ENCODE measurements at regions of chr5 and their contacts with region 1.

Region 1: DNA sequence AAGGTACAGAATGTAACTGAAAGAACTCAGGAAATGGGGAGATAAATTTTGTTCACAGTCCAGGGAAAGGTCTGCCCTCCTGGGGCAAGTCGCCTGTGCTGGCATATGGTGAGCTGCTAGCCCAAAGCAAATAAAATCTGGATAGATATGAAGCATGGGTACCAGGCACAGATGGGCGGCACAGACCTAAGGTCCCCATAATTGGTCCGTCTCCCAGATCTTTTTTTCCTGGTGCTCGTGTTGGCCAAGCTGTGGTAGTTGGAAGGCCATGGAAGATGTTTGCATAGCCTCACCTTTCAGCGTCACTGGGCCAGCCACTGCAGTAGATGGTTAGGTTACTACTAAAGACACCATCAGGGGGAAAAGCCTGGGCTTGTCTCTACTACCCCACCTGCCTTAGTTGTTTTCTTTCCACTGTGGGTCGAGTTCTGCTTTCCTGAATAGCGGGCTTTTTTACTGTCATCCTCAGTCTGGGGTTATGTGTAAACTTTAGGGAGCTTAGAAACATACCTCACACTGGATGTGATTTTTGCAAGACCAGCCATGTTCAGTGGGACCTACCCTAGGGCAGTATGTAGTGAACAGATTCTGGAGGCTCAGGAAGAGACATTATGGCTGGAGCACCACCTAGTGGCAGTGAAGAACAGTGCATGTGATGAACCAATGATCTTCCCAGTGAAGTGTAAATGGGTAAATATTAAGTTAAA is 24.2 kb upstream of the GLRX start:
- DNase-seq: peak; percentile 82
- ATAC-seq: peak; percentile 77
- H3K4me3 ChIP-seq: no peak overlapping the region
- H3K4me3 Mint-ChIP-seq: no peak overlapping the region
- H3K27ac ChIP-seq: no peak overlapping the region
- H3K27ac Mint-ChIP-seq: peak overlapping the region; percentile 46
- H3K4me1 ChIP-seq: peaks cover 9 to 10% of the 10 kb centered on the region in 2 donors
- H3K4me1 Mint-ChIP-seq: peaks cover 12% of the 10 kb centered on the region
- H3K27me3 ChIP-seq: no peaks in the 10 kb centered on the region
- H3K27me3 Mint-ChIP-seq: no peaks in the 10 kb centered on the region
- CTCF ChIP-seq: peak; percentile 95

Region 2: GRCh38 chr5:95486191-95486590 is 360.5 kb before region 1 on chr5:
- CTCF ChIA-PET with region 1: no interaction called
- POLR2A ChIA-PET with region 1: no interaction called
- intact Hi-C with region 1: no loop called
- DNase-seq: no peak
- ATAC-seq: no peak
- H3K4me3 ChIP-seq: no peak overlapping the region
- H3K4me3 Mint-ChIP-seq: no peak overlapping the region
- H3K27ac ChIP-seq: no peak overlapping the region
- H3K27ac Mint-ChIP-seq: no peak overlapping the region
- H3K4me1 ChIP-seq: no peaks in the 10 kb centered on the region
- H3K4me1 Mint-ChIP-seq: no peaks in the 10 kb centered on the region
- H3K27me3 ChIP-seq: no peaks in the 10 kb centered on the region
- H3K27me3 Mint-ChIP-seq: no peaks in the 10 kb centered on the region
- CTCF ChIP-seq: no peak

Region 3: GRCh38 chr5:95664204-95664786 is 182.4 kb before region 1 on chr5:
- CTCF ChIA-PET with region 1: interaction called, 105 read pairs
- POLR2A ChIA-PET with region 1: no interaction called
- intact Hi-C with region 1: loop called (anchors 1 kb)
- DNase-seq: peak; percentile 56
- ATAC-seq: no peak
- H3K4me3 ChIP-seq: no peak overlapping the region
- H3K4me3 Mint-ChIP-seq: no peak overlapping the region
- H3K27ac ChIP-seq: no peak overlapping the region
- H3K27ac Mint-ChIP-seq: no peak overlapping the region
- H3K4me1 ChIP-seq: no peaks in the 10 kb centered on the region
- H3K4me1 Mint-ChIP-seq: no peaks in the 10 kb centered on the region
- H3K27me3 ChIP-seq: no peaks in the 10 kb centered on the region
- H3K27me3 Mint-ChIP-seq: no peaks in the 10 kb centered on the region
- CTCF ChIP-seq: peak; percentile 95

Region 4: GRCh38 chr5:95690333-95690732 is 156.4 kb before region 1 on chr5:
- CTCF ChIA-PET with region 1: no interaction called
- POLR2A ChIA-PET with region 1: no interaction called
- intact Hi-C with region 1: no loop called
- DNase-seq: no peak
- ATAC-seq: no peak
- H3K4me3 ChIP-seq: no peak overlapping the region
- H3K4me3 Mint-ChIP-seq: no peak overlapping the region
- H3K27ac ChIP-seq: no peak overlapping the region
- H3K27ac Mint-ChIP-seq: no peak overlapping the region
- H3K4me1 ChIP-seq: no peaks in the 10 kb centered on the region
- H3K4me1 Mint-ChIP-seq: no peaks in the 10 kb centered on the region
- H3K27me3 ChIP-seq: peaks cover 0 to 4% (median 0%) of the 10 kb centered on the region in 4 experiments
- H3K27me3 Mint-ChIP-seq: peaks cover 3% of the 10 kb centered on the region
- CTCF ChIP-seq: no peak

Region 5: GRCh38 chr5:95808686-95809413 is 37.9 kb before region 1 on chr5:
- CTCF ChIA-PET with region 1: interaction called, 25 read pairs
- POLR2A ChIA-PET with region 1: interaction called, 9 read pairs
- intact Hi-C with region 1: loop called (anchors 1 kb)
- DNase-seq: peak; percentile 95
- ATAC-seq: peak; percentile 100
- H3K4me3 ChIP-seq: peak overlapping the region in 3 of 5 experiments; percentile 27 to 39 (median 33)
- H3K4me3 Mint-ChIP-seq: peak overlapping the region; percentile 86
- H3K27ac ChIP-seq: peak overlapping the region; percentile 81 to 97
- H3K27ac Mint-ChIP-seq: peak overlapping the region; percentile 97
- H3K4me1 ChIP-seq: peaks cover 34 to 37% of the 10 kb centered on the region in 2 donors
- H3K4me1 Mint-ChIP-seq: peaks cover 58% of the 10 kb centered on the region
- H3K27me3 ChIP-seq: no peaks in the 10 kb centered on the region
- H3K27me3 Mint-ChIP-seq: no peaks in the 10 kb centered on the region
- CTCF ChIP-seq: no peak

Region 6: GRCh38 chr5:95822542-95823181 is 24.0 kb before region 1 on chr5 and contains the start of gene GLRX:
- CTCF ChIA-PET with region 1: interaction called, 181 read pairs
- POLR2A ChIA-PET with region 1: interaction called, 4 read pairs
- intact Hi-C with region 1: loop called (anchors 1 kb)
- DNase-seq: peak; percentile 63
- ATAC-seq: peak; percentile 41
- H3K4me3 ChIP-seq: peak within 1 kb of the TSS; percentile 70 to 100 (median 97)
- H3K4me3 Mint-ChIP-seq: peak within 1 kb of the TSS; percentile 99
- H3K27ac ChIP-seq: peak within 1 kb of the TSS; percentile 67 to 90
- H3K27ac Mint-ChIP-seq: peak within 1 kb of the TSS; percentile 99
- H3K4me1 ChIP-seq: peaks cover 52 to 59% of the 10 kb centered on the region in 2 donors
- H3K4me1 Mint-ChIP-seq: peaks cover 70% of the 10 kb centered on the region
- H3K27me3 ChIP-seq: no peaks in the 10 kb centered on the region
- H3K27me3 Mint-ChIP-seq: no peaks in the 10 kb centered on the region
- CTCF ChIP-seq: no peak
- total RNA-seq, gene GLRX: 44.6 and 50.0 TPM in 2 replicates

Region 7: DNA sequence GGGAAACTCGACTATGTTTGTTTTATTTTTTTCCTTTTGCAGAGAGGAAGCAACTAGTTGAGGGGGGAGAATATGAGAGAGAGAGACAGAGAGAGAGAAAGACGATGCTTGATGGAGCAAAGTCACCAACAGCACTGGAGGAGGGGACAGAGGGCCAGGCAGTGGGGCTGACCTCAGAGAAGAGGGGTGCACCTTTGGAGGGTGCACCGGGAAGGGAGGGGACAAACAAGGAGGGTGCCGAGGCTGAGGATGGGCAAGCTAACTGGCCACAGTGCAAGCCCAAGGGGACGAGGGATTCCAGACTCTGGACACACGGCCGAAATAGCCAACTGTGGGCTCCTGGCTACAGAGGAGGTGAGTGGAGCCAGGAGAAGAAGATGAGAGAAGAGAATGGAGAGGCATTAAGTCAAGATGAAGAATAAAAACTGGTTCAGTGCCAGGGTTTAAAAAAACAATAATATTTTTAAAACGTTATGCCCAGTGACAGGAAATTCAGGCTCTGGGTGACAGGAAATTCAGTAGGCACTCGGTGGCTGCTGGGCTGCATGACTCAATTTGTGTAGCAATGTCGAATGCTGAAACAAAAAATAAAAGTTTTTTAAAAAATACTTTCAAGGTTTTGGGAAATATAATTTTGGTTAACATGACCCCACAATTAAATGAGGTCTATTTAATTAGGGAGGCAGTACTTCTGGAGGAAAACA is 10.9 kb before region 1 on chr5:
- CTCF ChIA-PET with region 1: interaction called, 11 read pairs
- POLR2A ChIA-PET with region 1: no interaction called
- intact Hi-C with region 1: loop called (anchors 1 kb)
- DNase-seq: peak; percentile 35
- ATAC-seq: no peak
- H3K4me3 ChIP-seq: peak overlapping the region; percentile 30 to 82 (median 67)
- H3K4me3 Mint-ChIP-seq: peak overlapping the region; percentile 75
- H3K27ac ChIP-seq: peak overlapping the region; percentile 60 to 86
- H3K27ac Mint-ChIP-seq: peak overlapping the region; percentile 91
- H3K4me1 ChIP-seq: peaks cover 24 to 26% of the 10 kb centered on the region in 2 donors
- H3K4me1 Mint-ChIP-seq: peaks cover 51% of the 10 kb centered on the region
- H3K27me3 ChIP-seq: no peaks in the 10 kb centered on the region
- H3K27me3 Mint-ChIP-seq: no peaks in the 10 kb centered on the region
- CTCF ChIP-seq: no peak

Region 8: DNA sequence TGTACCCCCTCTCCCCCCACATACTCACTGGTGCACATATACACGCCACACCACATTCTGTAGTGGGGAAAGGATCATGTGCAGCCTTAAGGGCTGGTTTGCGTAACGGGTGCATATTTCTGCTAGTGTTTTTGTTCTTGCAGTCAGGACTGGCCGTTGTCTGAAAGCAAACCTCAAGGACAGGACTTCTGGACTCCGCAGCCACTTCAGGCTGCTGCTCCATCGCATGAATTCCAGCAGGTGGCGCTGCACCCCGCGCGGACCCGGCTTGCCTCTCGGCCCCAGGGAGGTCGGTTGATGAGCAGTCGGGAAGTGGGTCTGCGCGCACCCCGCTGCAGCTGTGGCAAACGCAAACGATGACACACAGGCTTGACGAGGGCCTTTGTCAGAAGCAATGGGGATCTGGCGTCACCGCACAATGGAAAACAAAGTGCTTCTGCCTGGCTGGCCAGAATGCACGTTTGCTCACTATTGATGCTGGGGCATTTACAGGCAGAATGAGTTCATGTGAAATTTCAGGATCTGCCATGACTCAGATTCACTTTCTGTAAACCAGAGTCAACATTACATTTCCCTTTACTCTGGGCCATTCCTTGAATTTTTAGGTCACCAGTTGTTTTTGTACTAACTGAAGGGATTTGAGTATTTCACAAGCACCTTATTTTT is 12.1 kb after region 1 on chr5:
- CTCF ChIA-PET with region 1: interaction called, 10 read pairs
- POLR2A ChIA-PET with region 1: no interaction called
- intact Hi-C with region 1: no loop called
- DNase-seq: peak; percentile 89
- ATAC-seq: peak; percentile 94
- H3K4me3 ChIP-seq: peak overlapping the region in 3 of 5 experiments; percentile 7 to 25 (median 18)
- H3K4me3 Mint-ChIP-seq: peak overlapping the region; percentile 76
- H3K27ac ChIP-seq: no peak overlapping the region
- H3K27ac Mint-ChIP-seq: no peak overlapping the region
- H3K4me1 ChIP-seq: peaks cover 15 to 18% of the 10 kb centered on the region in 2 donors
- H3K4me1 Mint-ChIP-seq: peaks cover 30% of the 10 kb centered on the region
- H3K27me3 ChIP-seq: peaks cover 0 to 6% (median 1%) of the 10 kb centered on the region in 4 experiments
- H3K27me3 Mint-ChIP-seq: peaks cover 11% of the 10 kb centered on the region
- CTCF ChIP-seq: peak; percentile 97

Region 9: DNA sequence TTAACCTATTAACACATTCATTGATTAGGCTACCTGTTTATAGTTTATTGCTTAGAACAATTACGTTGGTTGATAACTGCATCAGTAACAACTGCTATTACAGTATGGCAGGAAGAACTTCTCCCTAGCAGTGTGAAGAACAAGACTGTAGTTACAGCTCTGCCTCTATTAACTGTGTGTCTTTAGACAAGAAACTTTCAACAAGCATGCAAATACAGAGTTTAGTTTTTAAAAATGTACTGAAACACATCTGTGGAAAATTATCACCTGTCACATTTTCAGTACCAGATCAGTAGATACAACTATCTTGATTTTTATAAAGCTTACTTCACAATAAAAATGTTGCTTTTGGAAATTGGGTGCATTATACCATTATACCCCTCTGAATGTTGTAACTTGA is 92.8 kb after region 1 on chr5:
- CTCF ChIA-PET with region 1: no interaction called
- POLR2A ChIA-PET with region 1: no interaction called
- intact Hi-C with region 1: no loop called
- DNase-seq: no peak
- ATAC-seq: no peak
- H3K4me3 ChIP-seq: no peak overlapping the region
- H3K4me3 Mint-ChIP-seq: no peak overlapping the region
- H3K27ac ChIP-seq: no peak overlapping the region
- H3K27ac Mint-ChIP-seq: no peak overlapping the region
- H3K4me1 ChIP-seq: no peaks in the 10 kb centered on the region
- H3K4me1 Mint-ChIP-seq: peaks cover 2% of the 10 kb centered on the region
- H3K27me3 ChIP-seq: no peaks in the 10 kb centered on the region
- H3K27me3 Mint-ChIP-seq: no peaks in the 10 kb centered on the region
- CTCF ChIP-seq: no peak

Region 10: DNA sequence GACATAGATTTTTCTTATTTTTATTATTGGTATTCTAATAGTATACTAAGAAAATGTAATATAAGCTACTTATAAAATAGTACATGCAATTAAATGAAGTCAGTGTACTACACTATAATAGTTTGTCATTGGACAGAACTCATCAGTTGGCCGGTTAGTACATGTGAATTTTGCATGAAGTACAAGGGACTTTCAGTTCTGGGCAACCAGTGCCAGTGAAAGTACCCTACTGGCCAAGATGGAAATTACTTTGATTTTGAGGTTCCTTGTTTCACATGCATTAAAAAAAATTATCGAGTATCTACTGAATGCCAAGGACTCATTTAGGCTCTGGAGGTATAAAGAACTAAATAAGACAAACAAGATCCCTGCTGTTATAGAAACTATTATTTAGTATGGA is 328.4 kb after region 1 on chr5:
- CTCF ChIA-PET with region 1: no interaction called
- POLR2A ChIA-PET with region 1: no interaction called
- intact Hi-C with region 1: no loop called
- DNase-seq: peak; percentile 12
- ATAC-seq: no peak
- H3K4me3 ChIP-seq: no peak overlapping the region
- H3K4me3 Mint-ChIP-seq: no peak overlapping the region
- H3K27ac ChIP-seq: no peak overlapping the region
- H3K27ac Mint-ChIP-seq: no peak overlapping the region
- H3K4me1 ChIP-seq: no peaks in the 10 kb centered on the region
- H3K4me1 Mint-ChIP-seq: peaks cover 3% of the 10 kb centered on the region
- H3K27me3 ChIP-seq: no peaks in the 10 kb centered on the region
- H3K27me3 Mint-ChIP-seq: peaks cover 4% of the 10 kb centered on the region
- CTCF ChIP-seq: peak; percentile 48

Measured in B cell (primary cell).